RWPE1 (cell line): ENCODE measurements at regions of chr17 and their contacts with region 1.

Region 1: DNA sequence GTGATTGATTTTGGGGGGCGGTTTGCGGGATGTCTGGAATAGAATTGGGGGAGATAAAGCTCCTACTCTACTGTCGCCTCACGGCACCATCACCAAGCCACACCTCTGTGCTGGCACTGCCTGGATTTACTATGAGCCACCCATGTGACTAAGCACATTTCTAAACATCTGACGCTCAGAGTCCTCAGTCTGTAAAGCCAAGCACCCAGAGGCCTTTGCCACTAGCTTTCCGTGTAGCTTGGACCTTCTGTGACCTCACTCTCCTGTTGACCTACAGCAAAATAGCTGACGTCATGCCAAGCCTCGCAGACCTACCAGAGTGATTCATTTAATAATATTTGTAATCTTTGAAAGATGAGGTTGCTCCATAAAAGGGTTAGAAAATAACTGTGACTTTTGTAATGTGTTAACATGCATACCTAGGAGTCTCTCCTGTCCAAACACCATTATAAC is 38.5 kb upstream of the MYOCD start:
- DNase-seq: peak; percentile 4
- H3K27ac ChIP-seq: no peak overlapping the region
- CTCF ChIP-seq: no peak

Region 2: GRCh38 chr17:12613566-12613965 is 13.6 kb before region 1 on chr17:
- CTCF ChIA-PET with region 1: no interaction called
- POLR2A ChIA-PET with region 1: no interaction called
- DNase-seq: no peak
- H3K27ac ChIP-seq: no peak overlapping the region
- CTCF ChIP-seq: no peak

Region 3: DNA sequence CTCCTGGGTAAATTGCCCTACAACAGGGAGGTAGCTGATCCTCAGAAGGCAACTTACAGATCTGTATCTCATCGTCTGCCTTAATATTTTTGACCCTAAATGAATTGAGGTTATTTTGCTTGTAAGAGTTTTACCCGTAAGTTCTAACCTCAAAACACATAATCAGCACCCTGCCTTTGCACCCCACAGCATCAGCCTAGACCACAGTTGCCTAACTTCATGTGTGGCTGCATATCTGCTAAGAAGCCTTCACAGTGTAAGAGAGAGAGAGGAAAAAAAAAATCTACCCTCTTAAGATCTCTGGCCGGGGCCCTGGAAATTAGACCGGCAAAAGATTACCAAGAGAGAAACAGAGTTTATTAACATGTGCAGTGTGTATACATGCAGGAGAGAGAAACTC is 239.0 kb after region 1 on chr17:
- CTCF ChIA-PET with region 1: no interaction called
- POLR2A ChIA-PET with region 1: interaction called, 10 read pairs
- DNase-seq: no peak
- H3K27ac ChIP-seq: no peak overlapping the region
- CTCF ChIP-seq: no peak